AG04450 (cell line): ENCODE measurements at regions of chr1 and their contacts with region 1.

Region 1: DNA sequence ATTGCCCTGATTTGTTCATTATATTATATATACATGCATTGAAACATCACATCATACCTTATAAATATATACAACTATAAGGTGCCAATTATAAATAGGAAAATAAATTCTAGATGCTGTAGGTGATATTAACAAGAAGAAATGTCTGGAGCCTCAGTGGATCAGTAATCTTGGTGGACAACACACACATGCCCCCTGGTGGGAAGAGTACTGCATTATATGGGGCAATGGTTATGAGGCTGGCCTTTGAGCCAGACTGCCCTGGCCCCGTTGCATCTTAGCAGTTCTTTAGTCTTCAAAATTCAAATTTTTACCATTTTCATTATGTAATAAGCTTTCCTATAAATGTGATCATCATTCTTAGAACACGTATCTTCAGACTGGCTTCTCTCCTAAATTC is 335.0 kb upstream of the GREM2 start:
- DNase-seq: peak; percentile 32
- H3K4me3 ChIP-seq: no peak overlapping the region
- H3K27ac ChIP-seq: no peak overlapping the region
- H3K27me3 ChIP-seq: no peaks in the 10 kb centered on the region
- CTCF ChIP-seq: peak; percentile 76

Region 2: DNA sequence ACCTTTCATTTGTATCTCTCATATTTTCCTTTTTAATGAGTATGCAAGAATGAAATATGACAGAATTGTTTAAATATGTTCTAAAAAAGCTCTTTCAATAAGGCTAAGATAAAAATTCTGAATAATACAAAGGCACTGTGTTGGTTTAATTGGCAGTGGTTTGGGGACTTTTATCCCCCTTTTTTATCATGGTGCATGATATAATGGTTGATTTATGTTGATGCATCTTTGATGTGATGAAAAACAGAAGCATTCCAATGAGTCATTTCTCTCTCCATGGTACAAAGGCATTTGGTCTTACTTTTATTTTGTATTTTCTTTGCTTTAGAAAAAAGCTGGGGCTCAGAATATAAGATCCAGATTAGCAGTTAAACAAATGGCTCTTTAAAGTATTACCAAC is 207.8 kb before region 1 on chr1:
- CTCF ChIA-PET with region 1: interaction called, 215 read pairs
- POLR2A ChIA-PET with region 1: no interaction called
- DNase-seq: no peak
- H3K4me3 ChIP-seq: no peak overlapping the region
- H3K27ac ChIP-seq: no peak overlapping the region
- H3K27me3 ChIP-seq: no peaks in the 10 kb centered on the region
- CTCF ChIP-seq: no peak

Region 3: DNA sequence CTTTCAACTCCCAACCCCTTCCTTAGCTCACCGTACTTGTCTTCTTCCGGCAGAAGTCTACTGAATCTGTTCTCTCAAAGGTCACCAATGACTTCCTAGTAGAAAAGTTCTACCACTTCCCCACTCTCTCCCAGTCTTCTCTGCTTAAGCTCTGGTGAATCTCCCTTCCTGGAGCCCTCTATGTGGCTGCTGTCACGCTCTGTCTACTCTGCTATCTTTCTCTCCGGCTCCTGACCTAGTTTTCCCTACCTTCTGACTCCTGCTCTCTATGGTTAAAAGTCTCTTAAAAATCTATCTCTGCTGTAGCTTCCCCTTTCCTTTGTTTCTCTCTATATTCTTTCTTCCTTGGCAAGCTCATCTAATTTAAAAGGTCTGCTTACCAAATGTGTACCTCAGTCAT is 15.2 kb after region 1 on chr1:
- CTCF ChIA-PET with region 1: interaction called, 10 read pairs
- POLR2A ChIA-PET with region 1: no interaction called
- DNase-seq: no peak
- H3K4me3 ChIP-seq: no peak overlapping the region
- H3K27ac ChIP-seq: no peak overlapping the region
- H3K27me3 ChIP-seq: no peaks in the 10 kb centered on the region
- CTCF ChIP-seq: no peak